Activated B cell treated with CpG ODN at 0.5 μM for 24 hours (primary cell): ENCODE measurements at regions of chr3 and their contacts with region 1.

Region 1: DNA sequence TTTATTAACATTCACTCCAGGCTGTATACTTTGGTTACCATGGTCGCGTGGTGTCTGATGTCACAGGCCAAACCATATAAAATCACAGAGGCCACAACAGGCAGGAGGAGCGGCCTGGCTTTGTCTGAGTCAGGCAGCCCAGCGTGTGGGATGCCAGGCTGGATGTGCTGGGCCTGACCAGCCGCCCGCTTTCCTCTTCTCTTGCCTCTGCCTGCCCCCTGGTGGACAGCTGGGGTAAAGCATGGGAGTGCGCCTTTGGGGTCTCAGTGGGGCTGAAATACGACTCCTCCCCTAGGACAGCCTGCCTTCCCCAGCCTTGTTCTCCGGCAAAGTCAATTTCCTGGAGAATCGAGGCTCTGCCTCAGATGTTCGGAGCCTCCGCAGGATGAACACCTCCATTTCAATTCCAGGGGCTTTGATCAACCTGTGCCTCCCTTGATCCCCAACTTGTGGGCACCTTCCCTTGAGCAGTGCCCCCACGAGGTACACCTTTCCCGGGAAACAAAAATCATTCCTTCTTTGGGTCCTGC is 78.2 kb downstream of the CCNL1 start:
- DNase-seq: peak; percentile 86
- ATAC-seq: peak; percentile 99
- H3K4me3 Mint-ChIP-seq: no peak overlapping the region
- H3K27ac Mint-ChIP-seq: peak overlapping the region; percentile 63
- H3K4me1 Mint-ChIP-seq: peaks cover 10% of the 10 kb centered on the region
- H3K27me3 Mint-ChIP-seq: no peaks in the 10 kb centered on the region
- CTCF ChIP-seq: peak; percentile 88

Region 2: DNA sequence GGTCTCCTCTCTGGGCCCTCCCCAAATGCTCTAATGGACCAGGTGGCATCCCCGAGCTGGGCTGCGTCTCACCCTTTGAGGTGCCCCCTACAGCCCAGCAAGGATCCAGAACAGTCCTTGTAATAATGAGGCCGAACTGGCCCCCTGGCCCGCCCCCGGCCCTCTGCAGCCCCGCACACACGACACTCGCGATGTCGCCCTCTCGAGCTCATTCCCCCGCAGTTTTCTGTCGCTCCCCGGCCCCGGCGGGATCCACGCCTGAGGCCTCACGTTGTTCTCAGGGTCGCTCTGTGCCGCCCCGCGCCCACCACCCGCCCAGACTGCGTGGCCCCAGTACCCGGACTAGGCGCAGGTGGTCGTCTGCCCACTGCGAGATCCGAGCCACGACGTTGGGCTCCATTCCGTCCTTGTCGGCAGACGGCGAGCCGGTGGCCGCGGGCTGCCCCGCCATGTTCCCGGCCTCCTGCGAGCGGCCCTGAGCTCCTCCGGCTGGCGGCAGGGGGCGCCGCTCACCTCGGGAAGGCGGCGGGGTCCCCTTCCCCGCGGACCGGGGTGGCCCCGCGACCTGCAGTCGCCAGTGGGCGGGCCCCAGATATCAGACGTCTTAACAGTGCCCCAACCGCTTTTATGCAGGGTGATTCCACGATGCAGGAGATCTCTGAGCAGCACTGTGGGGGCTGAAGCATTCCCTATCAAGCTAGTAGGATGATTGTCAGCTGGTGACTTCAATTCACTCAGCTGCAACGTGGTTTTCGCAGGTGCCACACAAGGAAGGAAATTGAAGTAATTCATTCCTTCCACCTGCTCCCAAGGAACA is 1275.7 kb before region 1 on chr3 and contains the start of gene C3orf33:
- CTCF ChIA-PET with region 1: no interaction called
- POLR2A ChIA-PET with region 1: no interaction called
- intact Hi-C with region 1: loop called (anchors 1 kb)
- DNase-seq: peak; percentile 75
- ATAC-seq: peak; percentile 93
- H3K4me3 Mint-ChIP-seq: peak within 1 kb of the TSS; percentile 90
- H3K27ac Mint-ChIP-seq: peak within 1 kb of the TSS; percentile 80
- H3K4me1 Mint-ChIP-seq: peaks cover 3% of the 10 kb centered on the region
- H3K27me3 Mint-ChIP-seq: peaks cover 6% of the 10 kb centered on the region
- CTCF ChIP-seq: peak; percentile 82
- total RNA-seq, gene C3orf33: 1.6 and 2.4 TPM in 2 replicates

Region 3: GRCh38 chr3:156516284-156516683 is 565.5 kb before region 1 on chr3:
- CTCF ChIA-PET with region 1: no interaction called
- POLR2A ChIA-PET with region 1: no interaction called
- intact Hi-C with region 1: no loop called
- DNase-seq: no peak
- ATAC-seq: no peak
- H3K4me3 Mint-ChIP-seq: no peak overlapping the region
- H3K27ac Mint-ChIP-seq: no peak overlapping the region
- H3K4me1 Mint-ChIP-seq: no peaks in the 10 kb centered on the region
- H3K27me3 Mint-ChIP-seq: peaks cover 12% of the 10 kb centered on the region
- CTCF ChIP-seq: no peak

Region 4: GRCh38 chr3:156816800-156817645 is 264.7 kb before region 1 on chr3:
- CTCF ChIA-PET with region 1: interaction called, 5 read pairs
- POLR2A ChIA-PET with region 1: interaction called, 11 read pairs
- intact Hi-C with region 1: loop called (anchors 1 kb)
- DNase-seq: peak; percentile 93
- ATAC-seq: peak; percentile 83
- H3K4me3 Mint-ChIP-seq: peak overlapping the region; percentile 94
- H3K27ac Mint-ChIP-seq: peak overlapping the region; percentile 99
- H3K4me1 Mint-ChIP-seq: peaks cover 42% of the 10 kb centered on the region
- H3K27me3 Mint-ChIP-seq: no peaks in the 10 kb centered on the region
- CTCF ChIP-seq: no peak

Region 5: GRCh38 chr3:156892701-156893100 is 189.0 kb before region 1 on chr3:
- CTCF ChIA-PET with region 1: interaction called, 4 read pairs
- POLR2A ChIA-PET with region 1: no interaction called
- intact Hi-C with region 1: loop called (anchors 1 kb)
- DNase-seq: no peak
- ATAC-seq: no peak
- H3K4me3 Mint-ChIP-seq: no peak overlapping the region
- H3K27ac Mint-ChIP-seq: no peak overlapping the region
- H3K4me1 Mint-ChIP-seq: no peaks in the 10 kb centered on the region
- H3K27me3 Mint-ChIP-seq: no peaks in the 10 kb centered on the region
- CTCF ChIP-seq: no peak

Region 6: DNA sequence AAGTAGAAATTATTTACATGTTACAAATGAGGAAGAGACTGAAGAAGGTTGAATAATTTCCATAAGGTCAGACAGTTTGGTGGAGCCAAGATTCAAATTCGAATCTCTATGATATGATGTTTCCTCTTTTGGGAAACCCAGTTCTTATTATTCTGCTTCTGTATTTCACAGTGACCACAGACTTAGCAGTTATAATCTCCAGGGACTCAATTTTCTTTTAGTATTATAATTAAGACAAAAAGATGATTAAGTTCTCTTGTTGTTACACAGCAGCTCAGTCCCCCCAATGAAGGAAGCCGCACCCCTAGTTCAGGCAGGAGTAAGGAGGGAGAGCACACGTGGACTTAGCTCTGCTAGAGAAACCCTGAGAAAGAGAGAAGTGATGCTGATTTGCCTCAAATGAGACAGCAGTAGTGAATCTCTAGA is 52.4 kb before region 1 on chr3:
- CTCF ChIA-PET with region 1: no interaction called
- POLR2A ChIA-PET with region 1: interaction called, 3 read pairs
- intact Hi-C with region 1: loop called (anchors 1 kb)
- DNase-seq: peak; percentile 19
- ATAC-seq: peak; percentile 92
- H3K4me3 Mint-ChIP-seq: peak overlapping the region; percentile 15
- H3K27ac Mint-ChIP-seq: peak overlapping the region; percentile 77
- H3K4me1 Mint-ChIP-seq: peaks cover 30% of the 10 kb centered on the region
- H3K27me3 Mint-ChIP-seq: peaks cover 2% of the 10 kb centered on the region
- CTCF ChIP-seq: no peak